HEK293 (cell line): ENCODE measurements at regions of chr10 and their contacts with region 1.

Region 1: GRCh38 chr10:132223156-132223590 is 36.4 kb downstream of the DPYSL4 start:
- H3K4me3 ChIP-seq: no peak overlapping the region
- H3K27ac ChIP-seq: no peak overlapping the region; the same call in 1 of the 2 replicates
- H3K4me1 ChIP-seq: no peaks in the 10 kb centered on the region
- CTCF ChIP-seq: peak; percentile 99

Region 2: GRCh38 chr10:132129431-132129830 is 93.7 kb before region 1 on chr10:
- CTCF ChIA-PET with region 1: no interaction called
- POLR2A ChIA-PET with region 1: no interaction called
- H3K4me3 ChIP-seq: no peak overlapping the region
- H3K27ac ChIP-seq: no peak overlapping the region
- H3K4me1 ChIP-seq: no peaks in the 10 kb centered on the region
- CTCF ChIP-seq: no peak

Region 3: GRCh38 chr10:132248455-132249225 is 25.5 kb after region 1 on chr10:
- CTCF ChIA-PET with region 1: no interaction called
- POLR2A ChIA-PET with region 1: no interaction called
- H3K4me3 ChIP-seq: no peak overlapping the region
- H3K27ac ChIP-seq: no peak overlapping the region
- H3K4me1 ChIP-seq: no peaks in the 10 kb centered on the region
- CTCF ChIP-seq: no peak

Region 4: DNA sequence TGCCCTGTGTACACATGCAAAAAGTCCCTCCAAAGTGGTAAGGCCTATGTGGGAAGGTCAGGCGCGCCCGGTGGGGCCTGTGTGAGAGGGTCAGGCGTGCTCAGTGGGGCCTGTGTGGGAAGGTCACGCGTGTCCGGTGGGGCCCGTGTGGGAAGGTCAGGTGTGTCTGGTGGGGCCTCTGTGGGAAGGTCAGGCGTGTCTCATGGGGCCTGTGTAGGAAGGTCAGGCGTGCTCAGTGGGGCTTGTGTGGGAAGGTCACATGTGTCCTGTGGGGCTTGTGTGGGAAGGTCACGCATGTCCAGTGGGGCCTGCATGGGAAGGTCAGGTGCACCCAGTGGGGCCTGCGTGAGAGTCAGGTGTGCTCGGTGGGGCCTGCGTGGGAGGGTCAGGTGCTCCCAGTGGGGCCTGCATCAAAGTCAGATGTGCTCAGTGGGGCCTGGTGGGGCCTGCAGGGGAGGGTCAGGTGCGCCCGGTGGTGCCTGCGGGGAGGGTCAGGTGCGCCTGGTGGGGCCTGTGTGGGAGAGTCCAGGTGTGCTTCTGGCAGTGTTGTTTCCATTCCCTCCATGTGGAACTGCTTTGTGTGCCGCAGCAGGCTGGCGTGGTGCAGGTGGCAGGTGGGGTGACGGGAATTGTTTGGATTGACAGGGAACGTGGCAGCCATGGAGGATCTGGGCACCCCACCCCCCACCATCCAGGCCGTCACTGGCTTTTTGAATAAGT is 124.2 kb after region 1 on chr10:
- CTCF ChIA-PET with region 1: interaction called, 12 read pairs
- POLR2A ChIA-PET with region 1: no interaction called
- H3K4me3 ChIP-seq: no peak overlapping the region
- H3K27ac ChIP-seq: no peak overlapping the region
- H3K4me1 ChIP-seq: no peaks in the 10 kb centered on the region
- CTCF ChIP-seq: no peak

Region 5: GRCh38 chr10:132375241-132376008 is 152.3 kb after region 1 on chr10:
- CTCF ChIA-PET with region 1: no interaction called
- POLR2A ChIA-PET with region 1: no interaction called
- H3K4me3 ChIP-seq: no peak overlapping the region
- H3K27ac ChIP-seq: no peak overlapping the region
- H3K4me1 ChIP-seq: no peaks in the 10 kb centered on the region
- CTCF ChIP-seq: no peak